ENCODE measurements at regions of chr12 and their contacts with region 1.

Region 1: GRCh38 chr12:57462251-57462911 is 2.8 kb downstream of the GLI1 start:
- DNase-seq: peak; percentile 83 to 87
- ATAC-seq: peak; percentile 62 to 81 (median 75)
- H3K4me3 ChIP-seq: peak overlapping the region; percentile 33 to 91 (median 70)
- H3K27ac ChIP-seq: peak overlapping the region in 9 of 10 donors; percentile 49 to 76 (median 71)
- H3K4me1 ChIP-seq: peaks cover 5 to 41% (median 28%) of the 10 kb centered on the region in 9 donors
- H3K27me3 ChIP-seq: peaks cover 0 to 20% (median 0%) of the 10 kb centered on the region in 7 donors
- CTCF ChIP-seq: peak; percentile 90 to 99 (median 93)

Region 2: GRCh38 chr12:56645717-56646446 is 816.5 kb before region 1 on chr12 and contains the start of gene ATP5F1B:
- intact Hi-C with region 1: no loop called
- DNase-seq: peak; percentile 91 to 99
- ATAC-seq: peak; percentile 97 to 99 (median 98)
- H3K4me3 ChIP-seq: peak within 1 kb of the TSS; percentile 72 to 96 (median 87)
- H3K27ac ChIP-seq: peak within 1 kb of the TSS; percentile 88 to 98 (median 95)
- H3K4me1 ChIP-seq: peaks cover 0 to 51% (median 44%) of the 10 kb centered on the region in 9 donors
- H3K27me3 ChIP-seq: no peaks in the 10 kb centered on the region
- CTCF ChIP-seq: peak in 1 of 9 donors; percentile 12
- total RNA-seq, gene ATP5F1B: 2,092 to 3,612 (median 3,330) TPM

Region 3: GRCh38 chr12:57213058-57213715 is 249.2 kb before region 1 on chr12:
- intact Hi-C with region 1: loop called in 1 of 10 experiments (anchors 10 kb)
- DNase-seq: peak; percentile 87 to 88
- ATAC-seq: peak; percentile 30 to 87 (median 75)
- H3K4me3 ChIP-seq: no peak overlapping the region
- H3K27ac ChIP-seq: peak overlapping the region in 8 of 10 donors; percentile 24 to 76 (median 50)
- H3K4me1 ChIP-seq: peaks cover 15 to 73% (median 56%) of the 10 kb centered on the region in 9 donors
- H3K27me3 ChIP-seq: peaks cover 8 to 47% (median 32%) of the 10 kb centered on the region in 7 donors
- CTCF ChIP-seq: peak; percentile 92 to 97 (median 94)

Region 4: GRCh38 chr12:57261428-57261865 is 200.9 kb before region 1 on chr12:
- intact Hi-C with region 1: loop called in 1 of 10 experiments (anchors 5 kb)
- DNase-seq: no peak
- ATAC-seq: peak in 6 of 8 donors; percentile 17 to 58 (median 43)
- H3K4me3 ChIP-seq: no peak overlapping the region
- H3K27ac ChIP-seq: peak overlapping the region in 9 of 10 donors; percentile 41 to 90 (median 83)
- H3K4me1 ChIP-seq: peaks cover 6 to 70% (median 28%) of the 10 kb centered on the region in 9 donors
- H3K27me3 ChIP-seq: no peaks in the 10 kb centered on the region
- CTCF ChIP-seq: no peak

Region 5: DNA sequence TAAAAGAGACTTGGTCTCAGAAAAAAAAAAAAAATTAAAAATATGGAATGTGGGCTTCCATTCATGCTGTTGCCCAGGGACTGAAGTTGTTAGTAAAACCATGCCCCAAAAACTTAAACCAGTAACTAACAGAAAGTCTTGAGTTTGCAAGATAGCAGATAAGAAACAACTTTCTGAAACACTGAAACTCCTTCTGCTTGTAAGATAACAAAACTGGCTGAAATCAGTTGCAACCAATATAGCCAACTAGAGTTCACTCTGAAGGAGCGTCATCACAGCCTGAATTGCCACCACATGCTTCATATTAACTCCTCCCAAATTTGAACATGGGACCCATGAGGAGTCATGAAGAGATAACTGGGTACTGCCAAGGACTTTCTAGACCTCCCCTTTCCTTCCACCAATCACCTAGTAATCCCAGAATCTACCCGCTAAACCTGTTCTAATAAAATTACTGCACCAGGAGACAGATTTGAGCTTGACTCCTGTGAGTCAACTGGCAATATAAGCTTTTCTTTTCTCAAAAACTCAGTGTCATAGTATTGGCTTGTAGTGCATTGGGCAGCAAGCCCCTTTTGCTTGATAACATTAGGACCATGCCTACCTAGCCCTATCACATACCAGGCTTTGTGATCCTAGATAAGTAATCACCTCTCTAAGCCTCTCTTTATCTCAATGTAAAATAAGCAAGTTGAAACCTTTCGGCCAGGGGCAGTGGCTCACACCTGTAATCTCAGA is 85.1 kb before region 1 on chr12:
- intact Hi-C with region 1: no loop called
- DNase-seq: no peak
- ATAC-seq: no peak
- H3K4me3 ChIP-seq: no peak overlapping the region
- H3K27ac ChIP-seq: no peak overlapping the region
- H3K4me1 ChIP-seq: peaks cover 0 to 7% (median 4%) of the 10 kb centered on the region in 9 donors
- H3K27me3 ChIP-seq: no peaks in the 10 kb centered on the region
- CTCF ChIP-seq: no peak

Region 6: DNA sequence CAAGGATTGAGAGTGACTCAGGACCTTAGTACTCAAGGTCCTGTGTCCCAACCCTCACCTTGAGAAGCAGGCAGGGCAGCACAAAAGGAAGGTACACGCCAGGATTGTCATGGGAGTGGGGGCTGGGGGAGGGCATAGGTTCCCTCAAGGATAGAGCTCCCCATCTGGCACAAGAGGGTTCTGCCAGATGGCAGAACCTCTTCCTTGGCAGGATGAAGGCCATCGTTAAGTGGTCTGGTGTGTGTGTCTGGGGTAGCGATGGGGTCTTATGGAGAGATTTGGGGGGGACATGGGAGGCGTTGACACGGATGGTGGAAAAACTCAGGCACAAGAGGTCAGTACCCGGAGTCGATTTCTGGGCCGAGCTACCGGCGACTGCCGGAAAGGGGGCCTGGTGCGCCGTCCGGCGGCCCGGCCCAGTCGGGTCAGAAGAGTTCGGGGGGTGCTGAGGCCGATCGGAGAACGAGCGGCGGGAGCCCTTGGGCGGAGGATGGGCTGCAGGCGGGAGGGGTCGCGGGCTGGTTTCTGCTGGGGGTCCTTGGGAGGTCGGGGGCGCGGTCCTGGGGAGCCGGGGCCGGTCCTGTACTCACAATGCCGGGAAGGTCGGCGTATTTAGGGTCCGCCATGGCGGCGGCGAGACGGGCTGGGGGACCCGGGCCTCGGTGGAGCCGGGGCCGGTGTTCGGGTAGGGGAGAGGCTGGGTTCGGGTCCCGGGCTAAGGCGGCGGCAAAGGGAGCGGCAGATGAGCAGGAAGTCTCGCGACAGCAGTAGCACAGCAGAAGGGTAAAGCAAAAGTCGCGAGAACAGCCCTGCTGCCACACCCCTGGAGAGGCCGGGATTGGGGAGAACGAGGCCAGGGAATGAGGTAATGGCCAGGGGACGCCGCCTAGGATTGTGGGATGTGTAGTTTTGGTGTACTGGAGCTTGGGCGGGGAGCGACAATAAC is 84.3 kb after region 1 on chr12 and contains the start of gene DCTN2:
- intact Hi-C with region 1: no loop called
- DNase-seq: peak; percentile 93 to 98
- ATAC-seq: peak; percentile 97 to 100 (median 99)
- H3K4me3 ChIP-seq: peak within 1 kb of the TSS; percentile 86 to 99 (median 96)
- H3K27ac ChIP-seq: peak within 1 kb of the TSS; percentile 46 to 95 (median 88)
- H3K4me1 ChIP-seq: peaks cover 13 to 45% (median 37%) of the 10 kb centered on the region in 9 donors
- H3K27me3 ChIP-seq: peaks cover 0 to 36% (median 34%) of the 10 kb centered on the region in 7 donors
- CTCF ChIP-seq: peak in 3 of 9 donors; percentile 6 to 23 (median 12)
- total RNA-seq, gene DCTN2: 82.9 to 116 (median 101) TPM

Region 7: DNA sequence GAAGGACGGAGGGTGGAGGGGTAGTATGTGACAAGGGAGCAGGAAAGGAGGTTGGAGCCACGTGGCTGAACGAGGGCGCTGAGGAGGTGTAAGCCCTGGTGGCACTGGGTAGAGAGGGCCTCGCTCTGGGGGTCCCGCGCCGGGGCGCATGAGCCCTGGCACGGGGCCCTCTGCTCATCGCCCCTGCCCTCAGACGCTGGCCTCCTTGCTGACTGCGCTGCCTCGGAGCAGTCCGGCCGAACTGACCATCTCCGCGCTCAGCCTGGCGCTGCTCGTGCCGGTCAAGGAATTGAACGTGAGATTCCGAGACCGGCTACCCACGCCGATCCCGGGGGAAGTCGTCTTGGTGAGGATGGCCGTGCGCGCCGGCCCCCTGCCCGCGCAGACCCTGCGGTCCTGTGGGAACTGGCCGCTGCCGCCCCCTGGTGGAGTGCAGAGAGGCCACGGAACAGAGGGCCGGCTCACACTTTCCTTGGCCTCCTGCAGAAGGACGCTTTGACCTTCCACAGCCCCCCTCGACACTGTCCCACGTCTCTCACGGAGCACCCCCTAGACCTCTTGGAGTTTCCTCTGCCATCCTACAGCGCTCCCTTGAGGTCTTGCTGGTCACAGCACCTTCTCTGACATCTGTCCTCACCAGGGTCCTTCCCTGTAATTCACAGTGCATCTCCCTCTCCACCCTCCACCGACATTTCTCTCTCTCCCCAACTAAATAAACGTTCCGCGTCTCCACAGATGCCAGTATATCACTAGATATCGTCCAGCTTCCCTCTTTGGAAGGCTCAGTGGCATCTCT is 159.3 kb after region 1 on chr12:
- intact Hi-C with region 1: loop called in 3 of 10 experiments (anchors 5 to 10 kb)
- DNase-seq: peak; percentile 61 to 75
- ATAC-seq: peak; percentile 64 to 79 (median 72)
- H3K4me3 ChIP-seq: peak overlapping the region; percentile 4 to 60 (median 52)
- H3K27ac ChIP-seq: peak overlapping the region in 2 of 10 donors; percentile 11 to 31
- H3K4me1 ChIP-seq: peaks cover 9 to 50% (median 21%) of the 10 kb centered on the region in 9 donors
- H3K27me3 ChIP-seq: peaks cover 11 to 96% (median 67%) of the 10 kb centered on the region in 7 donors
- CTCF ChIP-seq: peak; percentile 88 to 98 (median 95)

Region 8: GRCh38 chr12:57632694-57633477 is 170.5 kb after region 1 on chr12 and contains the start of gene B4GALNT1:
- intact Hi-C with region 1: loop called in 4 of 10 experiments (anchors 5 to 10 kb)
- DNase-seq: peak; percentile 36 to 71
- ATAC-seq: peak; percentile 80 to 91 (median 88)
- H3K4me3 ChIP-seq: peak within 1 kb of the TSS; percentile 57 to 78 (median 65)
- H3K27ac ChIP-seq: peak within 1 kb of the TSS in 5 of 10 donors; percentile 13 to 49 (median 28)
- H3K4me1 ChIP-seq: peaks cover 0 to 26% (median 17%) of the 10 kb centered on the region in 9 donors
- H3K27me3 ChIP-seq: peaks cover 6 to 85% (median 57%) of the 10 kb centered on the region in 7 donors
- CTCF ChIP-seq: peak; percentile 82 to 94 (median 87)
- total RNA-seq, gene B4GALNT1: 2.0 to 9.3 (median 5.5) TPM

Measured in heart right ventricle (tissue), 16 donors.